Caco-2 (cell line): ENCODE measurements at regions of chr4 and their contacts with region 1.

Region 1: DNA sequence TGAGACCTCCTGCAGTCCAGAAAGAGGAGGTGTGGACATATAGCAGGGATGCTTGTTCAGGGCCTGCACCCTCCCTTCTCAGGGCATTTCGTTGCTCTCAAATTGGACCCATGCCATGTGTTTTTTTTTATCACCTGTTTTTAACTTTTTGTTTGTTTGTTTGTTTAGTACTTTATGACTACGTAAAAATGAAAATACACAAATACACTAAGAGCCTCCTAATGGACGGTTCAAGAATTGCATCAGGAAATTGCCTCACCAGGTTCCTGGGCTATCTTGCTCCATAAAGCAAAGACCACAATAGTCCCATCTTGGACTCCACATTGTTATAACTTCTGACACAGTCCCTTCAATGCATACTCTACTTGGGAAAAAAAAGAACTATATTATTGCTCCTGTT is 1685.9 kb upstream of the TENM3 start:
- DNase-seq: no peak
- H3K4me3 ChIP-seq: no peak overlapping the region
- H3K4me3 Mint-ChIP-seq: no peak overlapping the region
- H3K27ac Mint-ChIP-seq: no peak overlapping the region
- H3K4me1 ChIP-seq: no peaks in the 10 kb centered on the region
- H3K4me1 Mint-ChIP-seq: no peaks in the 10 kb centered on the region
- H3K27me3 ChIP-seq: no peaks in the 10 kb centered on the region
- H3K27me3 Mint-ChIP-seq: peaks cover 4% of the 10 kb centered on the region
- CTCF ChIP-seq: peak in 1 of 2 experiments; percentile 23

Region 2: DNA sequence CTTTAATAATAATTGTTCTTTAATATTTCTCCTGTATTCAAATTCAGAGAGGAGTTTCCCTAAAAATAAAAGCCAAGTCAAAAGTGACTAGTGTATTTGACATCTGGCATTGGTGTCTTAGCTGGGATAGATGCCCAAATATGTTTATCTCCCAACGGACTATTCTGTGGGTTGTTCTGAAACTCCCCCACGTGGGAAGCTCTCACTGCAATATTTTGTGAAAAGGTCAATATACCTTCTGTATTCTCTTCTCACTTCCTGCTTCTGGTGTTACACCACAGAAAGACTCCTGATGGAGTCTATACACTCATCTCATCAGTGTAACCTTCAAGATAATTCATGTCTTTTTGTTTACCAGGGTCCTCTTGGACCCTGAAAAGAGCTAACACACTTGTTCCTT is 367.0 kb before region 1 on chr4:
- CTCF ChIA-PET with region 1: no interaction called
- POLR2A ChIA-PET with region 1: no interaction called
- intact Hi-C with region 1: no loop called
- DNase-seq: no peak
- H3K4me3 ChIP-seq: no peak overlapping the region
- H3K4me3 Mint-ChIP-seq: no peak overlapping the region
- H3K27ac Mint-ChIP-seq: no peak overlapping the region
- H3K4me1 ChIP-seq: no peaks in the 10 kb centered on the region
- H3K4me1 Mint-ChIP-seq: no peaks in the 10 kb centered on the region
- H3K27me3 ChIP-seq: no peaks in the 10 kb centered on the region
- H3K27me3 Mint-ChIP-seq: no peaks in the 10 kb centered on the region
- CTCF ChIP-seq: no peak

Region 3: DNA sequence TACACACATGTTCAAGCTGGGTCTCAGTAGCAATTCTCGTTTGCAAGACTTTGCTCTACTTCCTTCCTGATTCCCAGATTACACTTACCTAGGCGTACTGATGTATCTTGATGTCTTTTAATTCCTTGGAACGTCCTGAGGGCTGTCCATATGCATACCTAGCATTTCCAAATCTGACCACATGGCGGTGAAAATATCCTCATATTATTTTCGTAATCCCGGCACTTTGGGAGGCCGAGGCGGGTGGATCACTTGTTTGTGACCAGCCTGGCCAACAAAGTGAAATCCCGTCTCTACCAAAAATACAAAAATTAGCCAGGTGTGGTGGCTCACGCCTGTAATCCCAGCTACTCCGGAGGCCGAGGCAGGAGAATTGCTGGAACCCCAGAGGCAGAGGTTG is 100.4 kb before region 1 on chr4:
- CTCF ChIA-PET with region 1: no interaction called
- POLR2A ChIA-PET with region 1: no interaction called
- intact Hi-C with region 1: loop called (anchors 10 kb)
- DNase-seq: peak in 1 of 2 experiments; percentile 6
- H3K4me3 ChIP-seq: no peak overlapping the region
- H3K4me3 Mint-ChIP-seq: no peak overlapping the region
- H3K27ac Mint-ChIP-seq: no peak overlapping the region
- H3K4me1 ChIP-seq: no peaks in the 10 kb centered on the region
- H3K4me1 Mint-ChIP-seq: no peaks in the 10 kb centered on the region
- H3K27me3 ChIP-seq: no peaks in the 10 kb centered on the region
- H3K27me3 Mint-ChIP-seq: no peaks in the 10 kb centered on the region
- CTCF ChIP-seq: peak in 1 of 2 experiments; percentile 48

Region 4: GRCh38 chr4:180528003-180528402 is 29.3 kb before region 1 on chr4:
- CTCF ChIA-PET with region 1: no interaction called
- POLR2A ChIA-PET with region 1: no interaction called
- intact Hi-C with region 1: no loop called
- DNase-seq: no peak
- H3K4me3 ChIP-seq: no peak overlapping the region
- H3K4me3 Mint-ChIP-seq: no peak overlapping the region
- H3K27ac Mint-ChIP-seq: no peak overlapping the region
- H3K4me1 ChIP-seq: no peaks in the 10 kb centered on the region
- H3K4me1 Mint-ChIP-seq: no peaks in the 10 kb centered on the region
- H3K27me3 ChIP-seq: no peaks in the 10 kb centered on the region
- H3K27me3 Mint-ChIP-seq: no peaks in the 10 kb centered on the region
- CTCF ChIP-seq: no peak